B cell (primary cell): ENCODE measurements at regions of chr13 and their contacts with region 1.

Region 1: DNA sequence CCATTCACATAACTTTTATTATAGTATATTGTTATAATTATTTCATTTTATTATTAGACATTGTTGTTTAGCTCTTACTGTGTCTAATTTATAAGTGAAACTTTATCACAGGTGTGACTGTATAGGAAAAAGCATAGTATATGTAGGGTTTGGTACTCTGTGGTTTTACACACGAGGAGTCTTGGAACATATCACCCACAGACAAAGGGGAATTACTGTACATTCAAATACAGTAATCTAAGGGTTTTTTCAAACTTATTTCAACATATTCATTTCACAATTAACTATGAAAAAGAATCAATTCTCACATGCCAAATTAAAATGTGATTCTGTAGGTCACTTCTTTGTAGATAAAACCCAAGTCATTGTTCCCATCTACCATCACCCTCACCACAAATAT is 46.0 kb downstream of the RBM26 start:
- DNase-seq: no peak
- ATAC-seq: no peak
- H3K4me3 ChIP-seq: no peak overlapping the region
- H3K4me3 Mint-ChIP-seq: no peak overlapping the region
- H3K27ac ChIP-seq: no peak overlapping the region
- H3K27ac Mint-ChIP-seq: no peak overlapping the region
- H3K4me1 ChIP-seq: peaks cover 0 to 5% of the 10 kb centered on the region in 2 donors
- H3K4me1 Mint-ChIP-seq: peaks cover 13% of the 10 kb centered on the region
- H3K27me3 ChIP-seq: no peaks in the 10 kb centered on the region
- H3K27me3 Mint-ChIP-seq: no peaks in the 10 kb centered on the region
- CTCF ChIP-seq: no peak

Region 2: GRCh38 chr13:79328510-79328909 is 31.6 kb before region 1 on chr13:
- CTCF ChIA-PET with region 1: no interaction called
- POLR2A ChIA-PET with region 1: no interaction called
- intact Hi-C with region 1: loop called (anchors 5 kb)
- DNase-seq: no peak
- ATAC-seq: no peak
- H3K4me3 ChIP-seq: no peak overlapping the region
- H3K4me3 Mint-ChIP-seq: no peak overlapping the region
- H3K27ac ChIP-seq: no peak overlapping the region
- H3K27ac Mint-ChIP-seq: no peak overlapping the region
- H3K4me1 ChIP-seq: no peaks in the 10 kb centered on the region
- H3K4me1 Mint-ChIP-seq: no peaks in the 10 kb centered on the region
- H3K27me3 ChIP-seq: no peaks in the 10 kb centered on the region
- H3K27me3 Mint-ChIP-seq: no peaks in the 10 kb centered on the region
- CTCF ChIP-seq: no peak

Region 3: DNA sequence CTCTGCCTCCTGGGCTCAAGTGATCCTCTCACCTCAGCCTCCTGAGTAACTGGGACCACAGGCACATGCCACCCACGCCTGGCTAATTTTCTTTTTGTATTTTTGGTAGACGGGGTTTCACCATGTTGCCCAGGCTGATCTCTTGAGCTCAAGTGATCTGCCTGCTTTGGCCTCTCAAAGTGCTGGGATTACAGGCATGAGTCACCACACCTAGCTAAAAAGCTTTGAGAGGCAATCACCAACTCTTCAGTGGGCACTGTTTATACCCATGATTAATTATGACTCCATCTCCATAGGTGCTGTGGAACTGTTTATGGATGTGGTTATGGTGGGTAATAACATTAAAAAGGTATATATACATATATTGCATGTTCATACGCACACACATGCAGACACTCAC is 53.4 kb after region 1 on chr13:
- CTCF ChIA-PET with region 1: no interaction called
- POLR2A ChIA-PET with region 1: no interaction called
- intact Hi-C with region 1: no loop called
- DNase-seq: no peak
- ATAC-seq: no peak
- H3K4me3 ChIP-seq: no peak overlapping the region
- H3K4me3 Mint-ChIP-seq: no peak overlapping the region
- H3K27ac ChIP-seq: no peak overlapping the region
- H3K27ac Mint-ChIP-seq: no peak overlapping the region
- H3K4me1 ChIP-seq: no peaks in the 10 kb centered on the region
- H3K4me1 Mint-ChIP-seq: peaks cover 1% of the 10 kb centered on the region
- H3K27me3 ChIP-seq: no peaks in the 10 kb centered on the region
- H3K27me3 Mint-ChIP-seq: no peaks in the 10 kb centered on the region
- CTCF ChIP-seq: no peak